MCF 10A (cell line): ENCODE measurements at regions of chr11 and their contacts with region 1.

Region 1: DNA sequence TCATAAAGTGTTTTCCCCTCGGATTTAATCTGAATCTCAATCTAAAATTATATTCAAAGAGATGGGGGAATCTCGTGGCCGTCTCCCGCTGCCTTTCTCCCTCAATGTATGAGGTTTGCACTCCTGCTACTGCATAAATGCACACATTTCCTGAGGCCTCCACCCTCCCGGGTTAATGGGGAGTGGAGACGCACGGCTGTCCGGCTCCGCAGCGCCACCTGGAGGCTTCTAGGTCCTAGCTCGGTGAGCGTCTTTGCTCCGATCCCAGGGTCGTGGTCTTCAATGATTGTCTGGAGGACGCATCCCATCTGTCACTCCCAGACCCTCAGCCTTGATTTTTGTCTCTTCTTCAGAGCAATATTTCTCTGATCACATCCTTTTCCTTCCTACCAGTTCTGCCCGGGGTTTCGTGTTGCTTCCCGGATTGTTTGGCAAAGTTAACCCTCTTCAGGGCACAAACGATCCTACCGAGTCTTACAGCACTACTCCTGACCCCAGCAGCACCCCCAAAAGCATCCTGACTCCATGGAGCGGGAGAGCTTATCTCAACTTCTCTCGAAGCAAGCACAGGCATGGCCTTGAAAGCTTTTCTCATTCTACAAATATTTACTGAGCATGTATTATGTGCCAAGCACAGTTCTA is at the start of gene LMO1:
- DNase-seq: peak; percentile 79
- H3K4me3 Mint-ChIP-seq: peak within 1 kb of the TSS; percentile 61
- H3K27ac Mint-ChIP-seq: no peak within 1 kb of the TSS
- H3K4me1 Mint-ChIP-seq: peaks cover 12% of the 10 kb centered on the region
- H3K27me3 Mint-ChIP-seq: peaks cover 12% of the 10 kb centered on the region
- CTCF ChIP-seq: peak; percentile 86
- total RNA-seq, gene LMO1: not detected in 2 replicates

Region 2: DNA sequence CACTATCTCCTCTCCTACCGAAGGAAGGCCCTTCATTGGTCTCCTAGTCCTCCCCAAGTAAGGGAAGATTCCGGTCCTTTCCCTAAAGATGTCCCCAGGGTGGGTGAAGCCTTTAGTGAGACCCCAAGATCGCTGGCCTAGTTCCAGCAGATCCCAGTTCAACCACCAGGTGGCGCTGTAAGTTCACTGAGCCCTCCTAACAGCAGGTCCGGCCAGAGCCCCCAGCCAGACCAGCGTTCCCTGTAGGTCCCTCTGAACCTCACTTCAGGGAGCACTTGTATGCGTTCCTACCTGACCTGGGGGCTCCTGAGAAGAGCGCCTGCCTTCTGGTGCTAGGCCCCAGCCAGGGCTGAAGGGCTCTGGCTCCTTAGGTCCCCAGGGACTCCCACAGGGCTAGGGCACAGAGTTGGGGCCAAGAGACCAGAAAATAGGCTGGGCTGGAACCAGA is 38.3 kb before region 1 on chr11:
- CTCF ChIA-PET with region 1: interaction called, 398 read pairs
- POLR2A ChIA-PET with region 1: interaction called, 7 read pairs
- intact Hi-C with region 1: loop called (anchors 1 kb)
- DNase-seq: peak; percentile 63
- H3K4me3 Mint-ChIP-seq: no peak overlapping the region
- H3K27ac Mint-ChIP-seq: no peak overlapping the region
- H3K4me1 Mint-ChIP-seq: peaks cover 20% of the 10 kb centered on the region
- H3K27me3 Mint-ChIP-seq: no peaks in the 10 kb centered on the region
- CTCF ChIP-seq: peak; percentile 94

Region 3: GRCh38 chr11:8247312-8247711 is 16.6 kb before region 1 on chr11:
- CTCF ChIA-PET with region 1: interaction called, 42 read pairs
- POLR2A ChIA-PET with region 1: interaction called, 6 read pairs
- intact Hi-C with region 1: loop called (anchors 1 kb)
- DNase-seq: peak; percentile 41
- H3K4me3 Mint-ChIP-seq: no peak overlapping the region
- H3K27ac Mint-ChIP-seq: no peak overlapping the region
- H3K4me1 Mint-ChIP-seq: no peaks in the 10 kb centered on the region
- H3K27me3 Mint-ChIP-seq: peaks cover 4% of the 10 kb centered on the region
- CTCF ChIP-seq: peak; percentile 54

Region 4: DNA sequence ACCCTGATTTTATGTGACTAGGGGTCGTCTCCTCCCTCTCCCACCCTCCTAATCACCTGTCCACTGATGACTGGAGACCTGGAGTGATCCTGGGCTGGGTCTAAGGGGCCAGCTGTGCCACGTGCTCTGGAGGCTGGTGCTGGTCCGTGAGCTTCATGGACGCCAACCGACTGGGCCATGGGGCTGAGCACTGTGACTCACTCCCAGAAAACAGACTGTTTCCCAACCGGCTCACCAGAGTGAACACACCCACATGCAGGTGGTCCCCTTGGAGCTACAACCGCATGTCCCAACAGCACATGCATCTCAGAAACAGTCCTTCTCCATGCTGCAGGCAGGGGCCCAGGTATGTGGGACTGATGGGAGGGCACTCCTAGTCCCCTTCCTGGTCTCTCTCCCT is 13.8 kb after region 1 on chr11:
- CTCF ChIA-PET with region 1: interaction called, 39 read pairs
- POLR2A ChIA-PET with region 1: interaction called, 6 read pairs
- intact Hi-C with region 1: no loop called
- DNase-seq: peak; percentile 40
- H3K4me3 Mint-ChIP-seq: no peak overlapping the region
- H3K27ac Mint-ChIP-seq: no peak overlapping the region
- H3K4me1 Mint-ChIP-seq: no peaks in the 10 kb centered on the region
- H3K27me3 Mint-ChIP-seq: peaks cover 10% of the 10 kb centered on the region
- CTCF ChIP-seq: no peak

Region 5: DNA sequence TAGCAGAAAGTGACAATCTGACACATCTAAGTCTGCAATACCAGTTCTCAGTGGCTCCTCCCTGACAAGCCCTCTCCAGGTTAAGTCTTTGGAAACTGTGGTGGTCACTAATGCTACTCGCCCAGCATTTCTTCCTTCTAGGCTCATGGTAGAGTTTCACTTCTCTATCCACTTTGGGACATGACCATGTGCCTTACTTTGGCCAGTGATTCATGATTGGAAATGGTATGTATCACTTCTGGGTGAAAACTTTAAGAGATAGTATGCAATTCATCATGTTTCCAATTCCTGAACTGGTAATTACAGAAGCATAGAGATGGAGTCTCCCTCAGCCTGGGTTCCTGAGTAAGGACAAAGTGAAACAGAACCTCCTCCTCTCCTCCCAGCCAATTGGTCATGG is 151.3 kb after region 1 on chr11:
- CTCF ChIA-PET with region 1: no interaction called
- POLR2A ChIA-PET with region 1: no interaction called
- intact Hi-C with region 1: no loop called
- DNase-seq: no peak
- H3K4me3 Mint-ChIP-seq: no peak overlapping the region
- H3K27ac Mint-ChIP-seq: no peak overlapping the region
- H3K4me1 Mint-ChIP-seq: no peaks in the 10 kb centered on the region
- H3K27me3 Mint-ChIP-seq: peaks cover 82% of the 10 kb centered on the region
- CTCF ChIP-seq: no peak

Region 6: GRCh38 chr11:8566613-8567210 is 302.8 kb after region 1 on chr11:
- CTCF ChIA-PET with region 1: interaction called, 37 read pairs
- POLR2A ChIA-PET with region 1: no interaction called
- intact Hi-C with region 1: loop called (anchors 1 kb)
- DNase-seq: peak; percentile 59
- H3K4me3 Mint-ChIP-seq: no peak overlapping the region
- H3K27ac Mint-ChIP-seq: no peak overlapping the region
- H3K4me1 Mint-ChIP-seq: peaks cover 6% of the 10 kb centered on the region
- H3K27me3 Mint-ChIP-seq: peaks cover 38% of the 10 kb centered on the region
- CTCF ChIP-seq: peak; percentile 64

Region 7: DNA sequence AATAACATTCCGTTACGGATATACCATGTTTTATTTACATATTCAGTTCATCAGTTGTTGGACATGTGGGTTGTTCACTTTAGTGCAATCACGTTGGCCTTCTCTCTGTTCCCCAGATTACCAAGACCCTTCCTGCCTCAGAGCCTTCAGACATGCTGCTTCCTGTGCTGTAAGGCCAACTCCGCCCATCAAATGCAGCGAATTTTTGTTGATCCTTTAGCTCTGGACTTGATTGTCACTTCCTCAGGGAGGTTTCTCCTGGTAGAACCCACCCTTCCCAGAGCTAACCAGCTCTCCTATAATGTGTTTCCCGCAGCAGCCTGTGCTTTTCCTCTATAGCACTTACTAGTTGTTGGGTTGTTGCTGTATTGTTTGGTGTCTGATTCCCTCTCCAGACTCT is 1439.4 kb after region 1 on chr11:
- CTCF ChIA-PET with region 1: no interaction called
- POLR2A ChIA-PET with region 1: no interaction called
- intact Hi-C with region 1: no loop called
- DNase-seq: no peak
- H3K4me3 Mint-ChIP-seq: no peak overlapping the region
- H3K27ac Mint-ChIP-seq: no peak overlapping the region
- H3K4me1 Mint-ChIP-seq: peaks cover 5% of the 10 kb centered on the region
- H3K27me3 Mint-ChIP-seq: no peaks in the 10 kb centered on the region
- CTCF ChIP-seq: no peak